Psoas muscle (tissue), 8 donors: ENCODE measurements at regions of chr3 and their contacts with region 1.

Region 1: GRCh38 chr3:155232605-155233004 is 60.9 kb downstream of the STRIT1 start:
- DNase-seq: peak; percentile 77 to 88
- ATAC-seq: peak; percentile 91 to 95 (median 92)
- H3K4me3 ChIP-seq: peak overlapping the region; percentile 32
- H3K27ac ChIP-seq: peak overlapping the region; percentile 93
- H3K4me1 ChIP-seq: peaks cover 27% of the 10 kb centered on the region
- H3K27me3 ChIP-seq: no peaks in the 10 kb centered on the region
- CTCF ChIP-seq: no peak

Region 2: GRCh38 chr3:155065537-155065936 is 167.1 kb before region 1 on chr3:
- intact Hi-C with region 1: loop called in 1 of 2 experiments (anchors 5 kb)
- DNase-seq: peak in 1 of 2 donors; percentile 25
- ATAC-seq: peak; percentile 99
- H3K4me3 ChIP-seq: no peak overlapping the region
- H3K27ac ChIP-seq: peak overlapping the region; percentile 78
- H3K4me1 ChIP-seq: peaks cover 14% of the 10 kb centered on the region
- H3K27me3 ChIP-seq: no peaks in the 10 kb centered on the region
- CTCF ChIP-seq: no peak

Region 3: DNA sequence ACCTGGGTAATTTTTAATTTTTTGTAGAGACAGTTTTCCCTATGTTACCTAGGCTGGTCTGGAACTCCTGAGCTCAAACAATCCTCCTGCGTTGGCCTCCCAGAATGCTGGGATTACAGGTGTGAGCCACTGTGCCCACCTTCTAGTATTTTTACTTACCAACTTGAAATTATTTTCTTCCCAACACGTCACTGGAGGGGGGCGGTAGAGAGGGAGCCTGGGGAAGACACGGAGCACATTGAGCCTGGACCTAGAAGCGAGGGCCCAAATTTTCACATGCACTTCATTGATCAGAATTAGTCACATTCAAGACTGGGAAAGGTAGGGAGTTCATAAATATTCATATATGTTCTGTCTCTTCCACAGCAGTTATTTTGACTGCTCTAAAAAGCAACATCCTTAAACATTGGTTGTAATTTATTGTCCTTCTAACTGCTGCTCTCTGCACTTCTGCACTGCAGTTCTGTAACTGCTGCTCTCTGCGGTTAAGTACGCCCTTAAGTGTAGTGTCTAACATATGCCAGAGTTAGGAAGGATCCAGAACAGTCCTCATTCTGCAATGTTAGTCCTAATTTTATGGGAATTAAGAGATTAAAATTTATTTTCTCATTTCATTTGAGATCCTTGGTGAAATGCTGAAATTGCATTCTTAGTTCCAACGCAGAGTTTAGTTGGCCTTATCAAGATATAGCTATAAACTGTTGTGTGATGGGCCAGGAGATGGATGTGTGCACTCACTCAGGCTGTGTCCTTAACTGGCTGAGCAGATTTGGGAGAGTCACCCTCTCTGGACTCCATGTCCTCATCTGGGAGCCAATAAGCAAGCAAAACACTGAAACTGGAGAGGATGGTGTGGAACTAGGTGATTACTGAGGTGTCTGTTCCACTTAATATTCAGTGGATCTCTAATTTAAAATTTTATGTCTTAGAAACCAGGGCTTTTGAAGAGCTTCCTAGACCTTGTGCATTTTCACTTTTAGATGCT is 37.3 kb before region 1 on chr3:
- intact Hi-C with region 1: loop called (anchors 2 to 5 kb)
- DNase-seq: no peak
- ATAC-seq: peak in 1 of 4 donors; percentile 28
- H3K4me3 ChIP-seq: no peak overlapping the region
- H3K27ac ChIP-seq: peak overlapping the region; percentile 90
- H3K4me1 ChIP-seq: peaks cover 29% of the 10 kb centered on the region
- H3K27me3 ChIP-seq: no peaks in the 10 kb centered on the region
- CTCF ChIP-seq: no peak

Region 4: GRCh38 chr3:155292133-155292532 is 59.5 kb after region 1 on chr3:
- intact Hi-C with region 1: loop called (anchors 2 to 5 kb)
- DNase-seq: no peak
- ATAC-seq: peak; percentile 39 to 76 (median 52)
- H3K4me3 ChIP-seq: peak overlapping the region; percentile 63
- H3K27ac ChIP-seq: peak overlapping the region; percentile 82
- H3K4me1 ChIP-seq: no peaks in the 10 kb centered on the region
- H3K27me3 ChIP-seq: no peaks in the 10 kb centered on the region
- CTCF ChIP-seq: no peak